Endothelial cell of umbilical vein (primary cell): ENCODE measurements at regions of chr7 and their contacts with region 1.

Region 1: DNA sequence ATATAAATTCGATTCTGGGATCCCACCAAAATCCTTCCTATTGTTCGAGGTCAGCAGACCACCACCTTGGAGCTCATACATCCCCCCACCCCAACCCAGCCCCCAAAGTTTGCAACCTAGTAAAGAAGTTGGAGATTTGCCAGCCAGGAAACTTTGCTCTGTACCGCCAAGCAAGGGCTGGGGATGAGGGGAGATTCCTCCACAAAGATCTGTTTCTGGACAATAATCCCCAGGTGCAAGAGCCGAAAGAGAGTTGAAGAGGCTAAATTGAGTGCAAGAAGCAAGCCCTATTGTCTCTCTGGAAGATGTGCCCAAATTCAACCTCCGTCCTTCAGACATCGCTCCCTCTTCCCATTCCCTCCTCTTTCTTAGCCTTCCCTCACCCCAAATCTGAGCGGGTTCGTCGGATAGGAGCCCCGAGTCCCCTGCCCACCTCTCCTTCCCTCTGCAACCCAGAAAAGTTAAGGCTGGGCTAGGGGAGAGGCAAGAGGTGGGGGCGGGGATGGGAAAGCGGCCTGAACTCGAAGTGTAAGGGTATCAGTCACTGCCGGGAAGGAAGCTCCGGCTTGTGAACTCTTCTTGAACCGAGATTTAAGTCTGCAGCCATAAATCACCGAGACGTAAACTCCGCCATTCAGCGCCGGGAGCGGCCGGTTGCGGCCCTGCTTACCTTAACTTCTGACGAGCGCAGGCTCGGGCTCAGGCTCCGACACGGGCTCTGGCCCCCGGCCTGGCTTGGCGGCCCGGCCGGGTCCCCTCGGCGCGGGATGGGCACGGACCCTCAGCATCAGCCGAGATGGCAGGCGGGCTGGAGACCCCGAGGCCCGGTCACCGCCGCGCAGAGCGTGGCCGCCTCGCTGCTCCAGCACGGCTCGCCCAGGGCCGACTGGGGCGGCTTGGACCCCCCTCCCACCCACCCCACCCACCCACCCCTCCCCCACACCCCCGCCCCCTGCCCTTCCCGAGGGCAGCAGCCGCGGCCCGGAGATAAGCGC is 10.8 kb upstream of the HOXA2 start:
- DNase-seq: peak; percentile 92
- H3K4me3 ChIP-seq: peak overlapping the region; percentile 55 to 84 (median 72)
- H3K27ac ChIP-seq: peak overlapping the region; percentile 96
- H3K4me1 ChIP-seq: peaks cover 72% of the 10 kb centered on the region
- H3K27me3 ChIP-seq: no peaks in the 10 kb centered on the region
- CTCF ChIP-seq: no peak
- POLR2A ChIP-seq: peak; percentile 85

Region 2: GRCh38 chr7:26151953-26152781 is 961.1 kb before region 1 on chr7 and contains the start of gene NFE2L3:
- CTCF ChIA-PET with region 1: no interaction called
- POLR2A ChIA-PET with region 1: no interaction called
- dilution Hi-C with region 1: no loop called
- intact Hi-C with region 1: loop called (anchors 10 kb)
- DNase-seq: peak; percentile 77
- H3K4me3 ChIP-seq: peak within 1 kb of the TSS; percentile 42 to 71 (median 68)
- H3K27ac ChIP-seq: peak within 1 kb of the TSS; percentile 92
- H3K4me1 ChIP-seq: peaks cover 45% of the 10 kb centered on the region
- H3K27me3 ChIP-seq: peaks cover 0 to 4% of the 10 kb centered on the region in 2 experiments
- CTCF ChIP-seq: peak in 1 of 2 donors; percentile 7
- POLR2A ChIP-seq: peak; percentile 46
- total RNA-seq, gene NFE2L3: 28.4 and 40.2 TPM in 2 replicates

Region 3: DNA sequence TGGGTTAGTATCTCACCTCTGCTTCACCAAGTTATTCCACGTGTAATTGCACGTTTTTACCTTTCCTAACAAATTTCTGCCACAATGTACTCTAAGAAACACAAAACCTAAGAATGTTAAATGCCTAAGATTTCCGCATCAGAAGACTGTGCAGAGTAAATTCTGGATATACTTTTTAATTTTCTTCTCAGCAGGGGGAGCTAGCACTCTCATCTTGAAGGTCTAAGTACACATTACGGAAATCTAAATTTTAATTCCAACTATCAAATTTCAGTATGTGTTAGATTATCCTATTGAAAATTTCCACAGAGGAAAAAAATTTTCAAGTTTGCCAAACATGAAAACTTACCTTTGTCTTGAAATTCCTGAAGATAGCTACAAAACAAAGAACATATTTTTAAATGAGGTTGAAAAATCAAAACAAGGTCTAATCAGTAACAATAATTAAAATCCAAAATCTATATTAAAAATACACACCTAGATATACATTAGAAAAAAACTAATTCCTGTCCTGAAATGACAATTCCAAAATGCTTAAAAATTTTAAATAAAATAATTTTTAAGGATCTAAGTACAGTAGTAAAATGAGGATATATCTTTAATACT is 259.4 kb before region 1 on chr7:
- CTCF ChIA-PET with region 1: interaction called, 11 read pairs
- POLR2A ChIA-PET with region 1: no interaction called
- dilution Hi-C with region 1: no loop called
- intact Hi-C with region 1: no loop called
- DNase-seq: peak; percentile 69
- H3K4me3 ChIP-seq: no peak overlapping the region
- H3K27ac ChIP-seq: no peak overlapping the region
- H3K4me1 ChIP-seq: peaks cover 34% of the 10 kb centered on the region
- H3K27me3 ChIP-seq: no peaks in the 10 kb centered on the region
- CTCF ChIP-seq: peak; percentile 24 to 26
- POLR2A ChIP-seq: no peak

Region 4: GRCh38 chr7:26937939-26938623 is 175.2 kb before region 1 on chr7:
- CTCF ChIA-PET with region 1: no interaction called
- POLR2A ChIA-PET with region 1: no interaction called
- dilution Hi-C with region 1: no loop called
- intact Hi-C with region 1: no loop called
- DNase-seq: no peak
- H3K4me3 ChIP-seq: no peak overlapping the region
- H3K27ac ChIP-seq: no peak overlapping the region
- H3K4me1 ChIP-seq: no peaks in the 10 kb centered on the region
- H3K27me3 ChIP-seq: no peaks in the 10 kb centered on the region
- CTCF ChIP-seq: no peak
- POLR2A ChIP-seq: no peak

Region 5: GRCh38 chr7:27095897-27096767 is 17.1 kb before region 1 on chr7 and contains the start of gene HOXA1:
- CTCF ChIA-PET with region 1: interaction called, 62 read pairs
- POLR2A ChIA-PET with region 1: interaction called, 7 read pairs
- dilution Hi-C with region 1: no loop called
- intact Hi-C with region 1: loop called (anchors 1 kb)
- DNase-seq: peak; percentile 95
- H3K4me3 ChIP-seq: peak within 1 kb of the TSS; percentile 80 to 92 (median 86)
- H3K27ac ChIP-seq: peak within 1 kb of the TSS; percentile 93
- H3K4me1 ChIP-seq: peaks cover 48% of the 10 kb centered on the region
- H3K27me3 ChIP-seq: no peaks in the 10 kb centered on the region
- CTCF ChIP-seq: peak in 1 of 2 donors; percentile 10
- POLR2A ChIP-seq: peak; percentile 92
- total RNA-seq, gene HOXA1: 1.5 and 2.4 TPM in 2 replicates

Region 6: GRCh38 chr7:27124096-27124901 is 11.0 kb after region 1 on chr7:
- CTCF ChIA-PET with region 1: interaction called, 70 read pairs
- POLR2A ChIA-PET with region 1: interaction called, 3 read pairs
- dilution Hi-C with region 1: no loop called
- intact Hi-C with region 1: loop called (anchors 1 kb)
- DNase-seq: peak; percentile 58
- H3K4me3 ChIP-seq: peak overlapping the region in 1 of 3 experiments; percentile 36
- H3K27ac ChIP-seq: peak overlapping the region; percentile 96
- H3K4me1 ChIP-seq: peaks cover 75% of the 10 kb centered on the region
- H3K27me3 ChIP-seq: no peaks in the 10 kb centered on the region
- CTCF ChIP-seq: no peak
- POLR2A ChIP-seq: no peak

Region 7: DNA sequence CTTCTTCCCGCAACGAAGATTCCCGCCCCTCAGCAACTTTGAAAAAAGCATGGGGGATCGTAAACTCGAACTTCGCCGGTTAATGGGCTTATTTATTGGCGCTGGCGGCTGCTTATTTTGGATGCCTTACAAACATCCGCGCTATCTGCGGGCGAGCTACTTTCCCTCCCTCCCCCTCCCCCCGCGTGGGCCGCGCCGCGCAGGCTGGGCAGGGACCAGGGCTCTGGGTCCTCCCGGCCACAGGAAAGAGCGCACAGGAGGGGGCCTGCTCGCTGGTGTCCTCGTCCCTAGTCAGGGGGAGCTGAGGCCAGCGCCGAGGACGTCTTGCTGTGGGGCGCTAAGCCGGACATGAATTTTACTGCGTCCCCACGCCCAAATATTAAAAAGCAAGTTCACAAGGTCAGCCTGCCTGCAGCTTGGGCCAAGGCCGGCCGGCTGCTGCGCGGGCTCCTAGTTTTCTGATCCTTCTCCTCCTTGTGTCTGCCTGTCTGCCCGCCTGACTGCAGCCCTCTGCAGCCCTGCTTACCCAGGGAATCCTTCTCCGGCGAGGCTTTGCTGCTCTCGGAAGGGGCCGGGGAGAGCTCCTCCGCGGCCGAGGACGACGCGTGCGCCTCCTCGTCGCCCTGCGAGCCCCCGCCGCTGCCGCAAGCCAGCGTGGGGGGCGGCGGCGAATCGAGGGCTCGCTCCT is 59.7 kb after region 1 on chr7:
- CTCF ChIA-PET with region 1: no interaction called
- POLR2A ChIA-PET with region 1: no interaction called
- dilution Hi-C with region 1: no loop called
- intact Hi-C with region 1: loop called (anchors 2 kb)
- DNase-seq: peak; percentile 64
- H3K4me3 ChIP-seq: peak overlapping the region; percentile 35 to 88 (median 59)
- H3K27ac ChIP-seq: peak overlapping the region; percentile 96
- H3K4me1 ChIP-seq: peaks cover 57% of the 10 kb centered on the region
- H3K27me3 ChIP-seq: no peaks in the 10 kb centered on the region
- CTCF ChIP-seq: no peak
- POLR2A ChIP-seq: no peak